Activated B cell treated with CpG ODN at 0.5 μM for 24 hours (primary cell): ENCODE measurements at regions of chr5 and their contacts with region 1.

Region 1: DNA sequence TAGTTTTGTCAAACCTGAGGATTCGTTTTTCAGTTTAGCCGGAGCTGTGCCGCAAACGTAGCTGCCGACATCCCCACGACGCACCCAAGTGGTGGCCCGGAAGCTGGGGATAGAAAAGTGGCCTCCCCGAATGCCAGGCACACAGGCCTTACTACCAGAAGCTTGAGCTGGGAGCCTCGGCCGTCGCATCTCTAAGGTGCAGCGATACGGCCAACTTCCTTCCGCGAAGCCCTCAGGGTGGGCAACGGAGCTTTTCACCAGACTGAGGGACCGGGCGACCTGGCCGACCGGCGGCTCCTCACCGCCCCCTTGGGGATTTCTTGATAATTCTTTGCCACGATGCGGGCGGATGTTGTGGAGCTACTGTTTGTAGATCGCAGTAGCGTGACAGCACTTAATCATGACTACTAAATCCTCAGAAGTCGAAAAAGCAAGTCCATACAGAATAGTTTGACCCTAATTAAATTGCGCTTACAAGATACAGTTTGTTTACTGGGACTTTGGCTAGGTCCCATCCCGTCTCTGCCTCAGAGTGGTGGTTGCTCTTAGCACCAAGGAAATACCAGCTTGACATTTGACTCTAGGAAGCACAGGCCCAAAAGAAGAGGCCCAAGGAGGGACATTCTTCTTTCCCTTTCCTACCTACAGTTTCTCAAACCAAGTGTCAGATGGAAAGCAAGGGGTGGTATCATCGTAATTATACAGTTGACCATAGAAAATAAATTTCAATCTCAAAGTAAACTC is 613 bp upstream of the TMEM267 start:
- DNase-seq: peak; percentile 78
- ATAC-seq: peak; percentile 72
- H3K4me3 Mint-ChIP-seq: peak overlapping the region; percentile 95
- H3K27ac Mint-ChIP-seq: peak overlapping the region; percentile 100
- H3K4me1 Mint-ChIP-seq: peaks cover 33% of the 10 kb centered on the region
- H3K27me3 Mint-ChIP-seq: no peaks in the 10 kb centered on the region
- CTCF ChIP-seq: no peak

Region 2: GRCh38 chr5:41924872-41925554 is 1559.3 kb before region 1 on chr5 and contains the start of gene FBXO4:
- CTCF ChIA-PET with region 1: no interaction called
- POLR2A ChIA-PET with region 1: interaction called, 3 read pairs
- intact Hi-C with region 1: loop called (anchors 1 kb)
- DNase-seq: peak; percentile 82
- ATAC-seq: peak; percentile 95
- H3K4me3 Mint-ChIP-seq: peak within 1 kb of the TSS; percentile 93
- H3K27ac Mint-ChIP-seq: peak within 1 kb of the TSS; percentile 97
- H3K4me1 Mint-ChIP-seq: peaks cover 24% of the 10 kb centered on the region
- H3K27me3 Mint-ChIP-seq: no peaks in the 10 kb centered on the region
- CTCF ChIP-seq: no peak
- total RNA-seq, gene FBXO4: 14.8 and 15.9 TPM in 2 replicates

Region 3: GRCh38 chr5:43008369-43009153 is 475.7 kb before region 1 on chr5:
- CTCF ChIA-PET with region 1: no interaction called
- POLR2A ChIA-PET with region 1: interaction called, 30 read pairs
- intact Hi-C with region 1: loop called (anchors 5 kb)
- DNase-seq: peak; percentile 77
- ATAC-seq: peak; percentile 53
- H3K4me3 Mint-ChIP-seq: peak overlapping the region; percentile 89
- H3K27ac Mint-ChIP-seq: peak overlapping the region; percentile 98
- H3K4me1 Mint-ChIP-seq: peaks cover 31% of the 10 kb centered on the region
- H3K27me3 Mint-ChIP-seq: no peaks in the 10 kb centered on the region
- CTCF ChIP-seq: no peak

Region 4: DNA sequence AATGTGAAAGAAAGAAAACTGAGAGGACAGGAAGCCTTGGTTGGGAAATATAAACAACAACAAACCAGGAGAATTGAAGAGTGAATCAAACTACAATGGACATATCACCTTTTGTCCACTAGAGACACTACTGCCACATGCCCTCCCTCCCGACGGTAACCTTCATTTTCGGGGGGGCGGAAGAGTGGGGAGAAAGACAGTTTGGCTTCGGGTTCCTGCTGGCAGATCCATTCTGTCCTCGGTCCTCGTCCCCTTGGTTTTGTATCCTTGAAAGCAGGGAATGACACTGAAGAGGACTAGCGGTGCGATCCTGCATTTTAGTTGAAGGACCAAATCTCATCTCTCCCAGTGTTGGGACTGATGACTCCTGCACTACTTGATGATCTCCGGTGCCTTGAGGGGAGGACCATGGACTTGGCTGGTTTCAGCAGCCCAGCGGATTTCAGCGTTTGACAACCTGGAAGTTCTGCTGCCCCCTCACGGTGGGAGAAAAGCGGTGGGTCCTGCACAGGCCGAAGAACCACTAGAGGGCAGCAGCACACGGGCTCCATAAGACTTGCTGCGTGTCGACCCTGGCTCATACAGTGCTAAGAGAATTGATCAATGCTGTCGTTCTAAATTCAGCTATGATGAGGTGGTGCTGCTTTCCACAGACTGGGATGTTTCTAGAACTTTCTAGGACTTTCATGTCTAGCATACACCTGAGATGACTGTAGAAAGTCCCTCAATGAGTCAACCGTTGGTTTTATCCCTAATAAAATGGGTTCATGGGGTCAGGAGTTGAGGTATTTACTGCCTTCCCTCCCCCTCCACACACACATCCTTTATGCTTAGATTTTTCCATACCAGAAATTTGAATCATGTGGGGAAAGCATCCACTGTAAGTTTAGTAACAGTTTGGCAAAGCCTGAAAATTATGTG is 378.6 kb before region 1 on chr5:
- CTCF ChIA-PET with region 1: interaction called, 7 read pairs
- POLR2A ChIA-PET with region 1: interaction called, 8 read pairs
- intact Hi-C with region 1: loop called (anchors 5 kb)
- DNase-seq: peak; percentile 73
- ATAC-seq: peak; percentile 99
- H3K4me3 Mint-ChIP-seq: peak overlapping the region; percentile 83
- H3K27ac Mint-ChIP-seq: peak overlapping the region; percentile 80
- H3K4me1 Mint-ChIP-seq: peaks cover 7% of the 10 kb centered on the region
- H3K27me3 Mint-ChIP-seq: peaks cover 2% of the 10 kb centered on the region
- CTCF ChIP-seq: peak; percentile 100

Region 5: GRCh38 chr5:43305948-43306565 is 178.2 kb before region 1 on chr5:
- CTCF ChIA-PET with region 1: interaction called, 9 read pairs
- POLR2A ChIA-PET with region 1: interaction called, 117 read pairs
- intact Hi-C with region 1: loop called (anchors 1 kb)
- DNase-seq: no peak
- ATAC-seq: peak; percentile 60
- H3K4me3 Mint-ChIP-seq: no peak overlapping the region
- H3K27ac Mint-ChIP-seq: no peak overlapping the region
- H3K4me1 Mint-ChIP-seq: peaks cover 57% of the 10 kb centered on the region
- H3K27me3 Mint-ChIP-seq: no peaks in the 10 kb centered on the region
- CTCF ChIP-seq: no peak

Region 6: GRCh38 chr5:43376496-43377140 is 107.7 kb before region 1 on chr5:
- CTCF ChIA-PET with region 1: no interaction called
- POLR2A ChIA-PET with region 1: no interaction called
- intact Hi-C with region 1: no loop called
- DNase-seq: no peak
- ATAC-seq: no peak
- H3K4me3 Mint-ChIP-seq: no peak overlapping the region
- H3K27ac Mint-ChIP-seq: no peak overlapping the region
- H3K4me1 Mint-ChIP-seq: no peaks in the 10 kb centered on the region
- H3K27me3 Mint-ChIP-seq: no peaks in the 10 kb centered on the region
- CTCF ChIP-seq: no peak

Region 7: GRCh38 chr5:43514816-43515677 is 30.8 kb after region 1 on chr5 and contains the start of gene C5orf34:
- CTCF ChIA-PET with region 1: interaction called, 12 read pairs
- POLR2A ChIA-PET with region 1: interaction called, 140 read pairs
- intact Hi-C with region 1: loop called (anchors 1 kb)
- DNase-seq: peak; percentile 92
- ATAC-seq: peak; percentile 96
- H3K4me3 Mint-ChIP-seq: peak within 1 kb of the TSS; percentile 95
- H3K27ac Mint-ChIP-seq: peak within 1 kb of the TSS; percentile 95
- H3K4me1 Mint-ChIP-seq: peaks cover 23% of the 10 kb centered on the region
- H3K27me3 Mint-ChIP-seq: no peaks in the 10 kb centered on the region
- CTCF ChIP-seq: no peak
- total RNA-seq, gene C5orf34: 4.4 and 4.7 TPM in 2 replicates

Region 8: DNA sequence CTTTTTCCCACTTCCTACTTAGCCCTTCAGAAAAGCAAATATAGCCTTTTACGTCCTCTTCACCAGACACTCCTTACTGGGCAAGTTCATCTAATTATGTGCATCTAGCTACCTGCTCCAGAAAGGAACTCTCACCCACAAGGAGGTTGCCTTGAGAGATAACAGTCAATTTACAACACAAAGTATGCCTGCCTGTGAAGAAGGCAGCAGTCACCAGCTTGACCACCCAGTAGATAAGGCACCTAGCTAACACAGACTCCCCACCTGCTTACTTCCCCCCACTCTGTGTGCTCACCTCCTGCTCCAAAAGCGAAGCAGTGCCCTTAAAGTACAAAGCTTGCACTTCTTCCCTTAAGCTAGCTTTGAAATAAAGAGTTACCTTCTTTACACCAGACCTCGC is 1212.7 kb after region 1 on chr5:
- CTCF ChIA-PET with region 1: no interaction called
- POLR2A ChIA-PET with region 1: no interaction called
- intact Hi-C with region 1: no loop called
- DNase-seq: no peak
- ATAC-seq: no peak
- H3K4me3 Mint-ChIP-seq: no peak overlapping the region
- H3K27ac Mint-ChIP-seq: no peak overlapping the region
- H3K4me1 Mint-ChIP-seq: no peaks in the 10 kb centered on the region
- H3K27me3 Mint-ChIP-seq: no peaks in the 10 kb centered on the region
- CTCF ChIP-seq: no peak